Heart left ventricle (tissue), 16 donors: ENCODE measurements at regions of chr18 and their contacts with region 1.

Region 1: DNA sequence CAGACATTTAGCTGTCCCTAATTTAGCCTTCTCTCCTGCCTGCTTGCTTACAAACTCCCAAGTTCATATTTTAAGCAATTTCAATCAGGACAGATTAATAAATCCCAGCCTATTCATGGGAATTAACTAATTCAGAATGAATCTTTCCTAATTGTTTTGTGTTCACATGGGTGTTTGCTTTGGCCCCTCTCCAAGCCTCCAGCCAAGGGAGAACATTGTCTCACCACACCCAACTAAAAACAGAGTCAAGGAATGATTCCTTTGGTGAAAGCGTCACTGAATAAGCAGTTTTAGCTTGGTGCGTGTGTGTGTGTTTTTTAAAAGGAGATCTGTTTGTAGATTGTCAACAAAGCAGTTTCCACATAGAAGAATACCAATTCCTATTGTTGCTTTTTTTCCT is 43.0 kb upstream of the DSG1 start:
- DNase-seq: peak in 4 of 5 donors; percentile 56 to 72 (median 66)
- ATAC-seq: peak; percentile 66 to 89 (median 74)
- H3K4me3 ChIP-seq: peak overlapping the region in 2 of 12 donors; percentile 0 to 1
- H3K27ac ChIP-seq: peak overlapping the region; percentile 8 to 71 (median 39)
- H3K4me1 ChIP-seq: peaks cover 0 to 31% (median 20%) of the 10 kb centered on the region in 12 donors
- H3K27me3 ChIP-seq: no peaks in the 10 kb centered on the region
- CTCF ChIP-seq: no peak
- POLR2A ChIP-seq: no peak

Region 2: GRCh38 chr18:31399306-31400032 is 124.6 kb after region 1 on chr18:
- intact Hi-C with region 1: loop called in 3 of 10 experiments (anchors 5 to 10 kb)
- DNase-seq: no peak
- ATAC-seq: no peak
- H3K4me3 ChIP-seq: no peak overlapping the region
- H3K27ac ChIP-seq: no peak overlapping the region
- H3K4me1 ChIP-seq: peaks cover 0 to 18% (median 10%) of the 10 kb centered on the region in 12 donors
- H3K27me3 ChIP-seq: no peaks in the 10 kb centered on the region
- CTCF ChIP-seq: no peak
- POLR2A ChIP-seq: no peak

Region 3: GRCh38 chr18:31497837-31498573 is 223.1 kb after region 1 on chr18 and contains the start of gene DSG2:
- intact Hi-C with region 1: loop called in 5 of 10 experiments (anchors 5 to 10 kb)
- DNase-seq: peak; percentile 62 to 79 (median 78)
- ATAC-seq: peak; percentile 90 to 97 (median 96)
- H3K4me3 ChIP-seq: peak within 1 kb of the TSS; percentile 52 to 76 (median 68)
- H3K27ac ChIP-seq: peak within 1 kb of the TSS; percentile 52 to 84 (median 71)
- H3K4me1 ChIP-seq: peaks cover 0 to 19% (median 0%) of the 10 kb centered on the region in 12 donors
- H3K27me3 ChIP-seq: peaks cover 0 to 30% (median 0%) of the 10 kb centered on the region in 9 donors
- CTCF ChIP-seq: no peak
- POLR2A ChIP-seq: no peak
- total RNA-seq, gene DSG2: 36.0 to 54.4 (median 41.4) TPM

Region 4: GRCh38 chr18:31506024-31506742 is 231.3 kb after region 1 on chr18:
- intact Hi-C with region 1: loop called in 1 of 10 experiments (anchors 10 kb)
- DNase-seq: no peak
- ATAC-seq: no peak
- H3K4me3 ChIP-seq: no peak overlapping the region
- H3K27ac ChIP-seq: no peak overlapping the region
- H3K4me1 ChIP-seq: peaks cover 0 to 6% (median 0%) of the 10 kb centered on the region in 12 donors
- H3K27me3 ChIP-seq: no peaks in the 10 kb centered on the region
- CTCF ChIP-seq: peak; percentile 15 to 65 (median 50)
- POLR2A ChIP-seq: no peak